Breast epithelium (tissue), 4 donors: ENCODE measurements at regions of chr12 and their contacts with region 1.

Region 1: GRCh38 chr12:80946594-80946993 is 8.9 kb upstream of the LIN7A start:
- DNase-seq: no peak
- H3K4me3 ChIP-seq: no peak overlapping the region
- H3K27ac ChIP-seq: no peak overlapping the region
- H3K4me1 ChIP-seq: no peaks in the 10 kb centered on the region
- H3K27me3 ChIP-seq: no peaks in the 10 kb centered on the region
- CTCF ChIP-seq: no peak
- POLR2A ChIP-seq: no peak

Region 2: DNA sequence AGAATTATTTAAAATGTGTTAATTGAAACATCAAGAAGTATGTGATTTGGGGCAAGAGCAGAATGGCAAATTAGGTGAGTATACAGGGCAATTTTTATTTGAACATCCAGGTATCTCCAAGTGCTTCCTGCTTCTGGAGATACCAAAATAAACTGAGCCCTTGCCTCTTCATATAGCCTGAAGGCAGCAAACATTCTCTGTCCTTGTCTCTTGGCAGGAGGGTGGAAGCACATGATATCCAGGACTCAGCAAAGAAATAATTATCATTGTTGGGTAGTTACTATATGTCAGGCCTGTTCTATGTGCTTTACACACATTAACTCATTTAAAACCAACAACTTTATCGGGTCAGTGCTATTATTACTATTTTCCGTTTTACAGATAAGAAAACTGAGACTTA is 21.4 kb before region 1 on chr12:
- intact Hi-C with region 1: loop called (anchors 2 kb)
- DNase-seq: no peak
- H3K4me3 ChIP-seq: no peak overlapping the region
- H3K27ac ChIP-seq: no peak overlapping the region
- H3K4me1 ChIP-seq: no peaks in the 10 kb centered on the region
- H3K27me3 ChIP-seq: no peaks in the 10 kb centered on the region
- CTCF ChIP-seq: no peak
- POLR2A ChIP-seq: no peak